ENCODE measurements at regions of chr1 and their contacts with region 1.

Region 1: DNA sequence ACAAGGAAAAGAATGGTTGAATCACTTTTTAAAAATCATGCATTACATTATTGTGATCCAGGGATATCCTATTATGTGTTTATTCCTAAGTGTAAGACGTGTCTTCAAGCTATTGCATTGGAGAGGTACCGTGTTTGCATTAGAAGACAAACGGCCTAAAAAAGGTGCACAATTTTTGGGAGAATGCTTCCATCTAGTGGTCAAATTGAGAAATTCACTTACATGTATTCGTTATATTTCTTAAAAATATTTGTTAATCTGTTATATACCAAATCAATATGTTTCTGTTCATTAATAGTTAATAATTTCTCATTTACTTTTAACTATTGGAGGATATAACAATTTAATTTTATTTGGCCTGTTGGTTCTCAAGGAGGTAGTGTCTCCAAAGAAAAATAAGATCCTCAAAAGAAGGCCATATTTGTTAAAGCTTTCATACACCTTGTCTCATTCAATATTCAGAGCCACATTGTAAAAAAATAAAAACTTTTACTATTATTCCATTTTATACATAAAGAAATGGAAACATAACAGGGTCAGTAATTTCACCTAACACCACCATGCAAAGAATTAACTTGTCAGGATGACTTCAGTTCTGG is 40.5 kb upstream of the KCTD3 start:
- DNase-seq: peak; percentile 69
- H3K4me3 ChIP-seq: no peak overlapping the region
- H3K27ac ChIP-seq: no peak overlapping the region
- H3K4me1 ChIP-seq: peaks cover 4% of the 10 kb centered on the region
- H3K27me3 ChIP-seq: peaks cover 34% of the 10 kb centered on the region
- CTCF ChIP-seq: peak; percentile 66

Region 2: DNA sequence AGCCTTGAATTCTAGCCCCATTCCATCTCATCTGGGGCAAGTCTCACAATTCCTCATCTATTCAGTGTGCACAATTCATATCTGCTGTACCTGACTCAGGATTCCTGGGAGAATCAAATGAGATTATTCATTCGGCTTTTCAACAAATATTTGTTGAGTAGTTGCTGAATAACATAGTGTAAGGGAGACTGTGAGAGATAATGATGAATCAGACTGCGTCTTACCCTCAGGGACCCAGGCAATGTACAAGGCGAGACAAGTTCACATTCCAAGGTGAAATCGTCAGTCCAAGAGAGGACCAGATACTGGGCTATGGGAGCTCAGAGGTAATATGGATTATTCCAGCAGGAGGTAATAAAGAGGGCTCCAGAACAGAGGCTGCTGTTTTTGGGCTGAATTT is 1313.5 kb before region 1 on chr1:
- CTCF ChIA-PET with region 1: interaction called, 6 read pairs
- POLR2A ChIA-PET with region 1: no interaction called
- intact Hi-C with region 1: loop called (anchors 10 kb)
- DNase-seq: no peak
- H3K4me3 ChIP-seq: no peak overlapping the region
- H3K27ac ChIP-seq: no peak overlapping the region
- H3K4me1 ChIP-seq: no peaks in the 10 kb centered on the region
- H3K27me3 ChIP-seq: peaks cover 13% of the 10 kb centered on the region
- CTCF ChIP-seq: no peak

Region 3: GRCh38 chr1:214660862-214661261 is 865.8 kb before region 1 on chr1:
- CTCF ChIA-PET with region 1: interaction called, 3 read pairs
- POLR2A ChIA-PET with region 1: no interaction called
- intact Hi-C with region 1: loop called (anchors 5 kb)
- DNase-seq: peak; percentile 83
- H3K4me3 ChIP-seq: no peak overlapping the region
- H3K27ac ChIP-seq: no peak overlapping the region
- H3K4me1 ChIP-seq: peaks cover 8% of the 10 kb centered on the region
- H3K27me3 ChIP-seq: no peaks in the 10 kb centered on the region
- CTCF ChIP-seq: peak; percentile 73

Region 4: DNA sequence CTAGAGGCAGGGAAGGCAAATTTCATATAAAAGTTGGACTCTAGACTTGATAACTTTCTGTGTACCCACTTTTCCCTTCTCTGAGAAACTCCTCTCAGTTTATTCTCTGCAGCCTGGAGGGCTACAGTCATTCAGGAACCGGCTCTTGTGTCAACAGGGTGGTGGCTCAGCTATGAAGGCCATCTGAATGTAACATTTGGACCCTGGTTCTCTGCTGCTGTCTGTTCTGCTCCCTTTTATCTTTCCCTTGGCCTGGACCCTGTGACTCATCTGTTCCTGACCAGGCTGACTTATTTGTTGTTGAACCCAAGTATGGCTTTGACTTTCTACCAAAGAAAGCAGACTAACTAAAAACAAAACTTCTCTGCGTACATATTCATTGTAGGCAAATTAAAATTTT is 848.3 kb before region 1 on chr1:
- CTCF ChIA-PET with region 1: no interaction called
- POLR2A ChIA-PET with region 1: no interaction called
- intact Hi-C with region 1: loop called (anchors 5 kb)
- DNase-seq: no peak
- H3K4me3 ChIP-seq: no peak overlapping the region
- H3K27ac ChIP-seq: no peak overlapping the region
- H3K4me1 ChIP-seq: no peaks in the 10 kb centered on the region
- H3K27me3 ChIP-seq: no peaks in the 10 kb centered on the region
- CTCF ChIP-seq: no peak

Region 5: GRCh38 chr1:214808845-214809460 is 717.7 kb before region 1 on chr1:
- CTCF ChIA-PET with region 1: no interaction called
- POLR2A ChIA-PET with region 1: no interaction called
- intact Hi-C with region 1: loop called (anchors 5 kb)
- DNase-seq: peak; percentile 33
- H3K4me3 ChIP-seq: no peak overlapping the region
- H3K27ac ChIP-seq: no peak overlapping the region
- H3K4me1 ChIP-seq: no peaks in the 10 kb centered on the region
- H3K27me3 ChIP-seq: peaks cover 25% of the 10 kb centered on the region
- CTCF ChIP-seq: peak; percentile 42

Region 6: DNA sequence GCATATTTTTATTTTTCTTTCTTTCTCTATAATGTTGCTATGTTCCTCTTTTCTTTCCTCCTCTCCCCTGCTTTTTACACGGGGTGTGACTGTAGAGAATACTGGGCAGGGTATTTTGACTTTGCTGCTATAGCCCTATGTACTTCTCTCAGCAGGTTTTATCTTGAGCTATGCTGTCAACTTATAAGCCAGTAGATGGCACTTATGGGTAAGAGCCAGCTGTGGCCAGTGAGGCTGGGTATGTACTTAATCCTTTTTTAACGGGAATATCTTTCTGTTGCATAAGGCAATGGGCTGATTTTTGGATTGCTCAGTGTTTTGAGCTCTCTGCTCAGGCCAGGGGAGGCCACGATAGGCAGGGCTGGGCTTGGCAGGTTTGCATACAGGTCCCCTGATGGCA is 345.1 kb before region 1 on chr1:
- CTCF ChIA-PET with region 1: interaction called, 5 read pairs
- POLR2A ChIA-PET with region 1: no interaction called
- intact Hi-C with region 1: loop called (anchors 5 kb)
- DNase-seq: peak; percentile 43
- H3K4me3 ChIP-seq: no peak overlapping the region
- H3K27ac ChIP-seq: no peak overlapping the region
- H3K4me1 ChIP-seq: no peaks in the 10 kb centered on the region
- H3K27me3 ChIP-seq: no peaks in the 10 kb centered on the region
- CTCF ChIP-seq: peak; percentile 53; the same call in 1 of the 2 replicates